ENCODE measurements at regions of chr11 and their contacts with region 1.

Region 1: GRCh38 chr11:75588051-75588481 is 26.0 kb downstream of the SERPINH1 start:
- DNase-seq: no peak
- ATAC-seq: no peak
- H3K4me3 ChIP-seq: no peak overlapping the region
- H3K27ac ChIP-seq: no peak overlapping the region
- H3K4me1 ChIP-seq: no peaks in the 10 kb centered on the region
- H3K27me3 ChIP-seq: peaks cover 2% of the 10 kb centered on the region; the same call in 1 of the 2 replicates
- CTCF ChIP-seq: no peak
- POLR2A ChIP-seq: no peak
- RAD21 ChIP-seq: no peak

Region 2: DNA sequence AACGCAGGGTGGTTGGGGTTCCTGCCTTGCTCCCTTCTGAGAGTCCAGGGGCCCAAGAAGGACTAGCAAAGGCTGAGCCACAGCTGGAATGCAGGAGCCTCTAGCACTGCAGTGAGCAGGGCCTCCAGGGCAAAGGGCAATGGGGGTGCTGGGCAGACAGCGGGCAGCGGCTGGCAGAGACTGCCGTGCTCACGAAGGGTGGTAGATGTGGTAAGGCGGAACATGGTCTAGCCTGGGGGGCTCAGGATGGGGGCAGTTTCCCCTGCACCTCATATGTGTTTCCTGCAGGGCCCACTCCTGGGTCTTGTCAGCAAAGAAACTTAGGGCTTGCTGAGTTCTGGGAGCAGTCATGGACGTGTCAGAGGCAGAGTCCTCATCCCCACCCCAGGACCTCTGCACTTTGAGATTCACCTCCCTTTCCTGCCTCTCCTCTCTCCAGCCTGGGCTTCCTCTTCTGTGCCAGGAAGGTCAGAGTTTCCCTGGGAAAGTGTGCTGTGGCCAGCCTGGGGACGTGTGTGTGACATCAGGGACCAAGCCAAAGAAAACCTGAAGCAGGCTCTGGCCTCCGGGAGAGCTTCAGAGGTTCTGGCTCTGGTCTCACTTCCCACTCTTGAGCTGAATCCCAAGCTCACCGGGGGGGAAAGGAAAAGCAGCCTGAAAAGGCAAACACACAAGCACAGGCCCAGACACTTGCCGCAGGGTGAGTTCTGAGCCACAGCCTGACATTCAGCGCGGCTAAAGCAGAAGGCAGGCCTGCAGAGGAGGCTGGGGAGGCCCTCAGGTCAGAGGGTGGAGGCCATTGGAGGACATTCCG is 134.0 kb after region 1 on chr11:
- CTCF ChIA-PET with region 1: no interaction called
- POLR2A ChIA-PET with region 1: no interaction called
- RAD21 ChIA-PET with region 1: interaction called in 1 of 2 experiments, 10 read pairs
- intact Hi-C with region 1: no loop called
- DNase-seq: no peak
- ATAC-seq: no peak
- H3K4me3 ChIP-seq: no peak overlapping the region
- H3K27ac ChIP-seq: no peak overlapping the region
- H3K4me1 ChIP-seq: peaks cover 0 to 4% of the 10 kb centered on the region in 2 experiments; a peak in 1 of 4 replicates
- H3K27me3 ChIP-seq: no peaks in the 10 kb centered on the region
- CTCF ChIP-seq: no peak
- POLR2A ChIP-seq: no peak
- RAD21 ChIP-seq: no peak

Measured in HCT116 (cell line).